K562 (cell line): ENCODE measurements at regions of chr1 and their contacts with region 1.

Region 1: GRCh38 chr1:62687903-62688686 is at the start of gene DOCK7:
- DNase-seq: peak; percentile 72 to 76 (median 74)
- ATAC-seq: peak; percentile 79
- H3K4me3 ChIP-seq: peak within 1 kb of the TSS; percentile 76
- H3K27ac ChIP-seq: peak within 1 kb of the TSS; percentile 78
- H3K4me1 ChIP-seq: peaks cover 23 to 32% of the 10 kb centered on the region in 2 experiments; a peak in 4 of 5 replicates
- H3K27me3 ChIP-seq: no peaks in the 10 kb centered on the region
- CTCF ChIP-seq: no peak
- EP300 ChIP-seq: no peak
- POLR2A ChIP-seq: peak; percentile 53
- RAD21 ChIP-seq: no peak; a peak in 1 of 4 replicates
- polyA plus RNA-seq, gene DOCK7: 4.9 to 10.6 TPM

Region 2: DNA sequence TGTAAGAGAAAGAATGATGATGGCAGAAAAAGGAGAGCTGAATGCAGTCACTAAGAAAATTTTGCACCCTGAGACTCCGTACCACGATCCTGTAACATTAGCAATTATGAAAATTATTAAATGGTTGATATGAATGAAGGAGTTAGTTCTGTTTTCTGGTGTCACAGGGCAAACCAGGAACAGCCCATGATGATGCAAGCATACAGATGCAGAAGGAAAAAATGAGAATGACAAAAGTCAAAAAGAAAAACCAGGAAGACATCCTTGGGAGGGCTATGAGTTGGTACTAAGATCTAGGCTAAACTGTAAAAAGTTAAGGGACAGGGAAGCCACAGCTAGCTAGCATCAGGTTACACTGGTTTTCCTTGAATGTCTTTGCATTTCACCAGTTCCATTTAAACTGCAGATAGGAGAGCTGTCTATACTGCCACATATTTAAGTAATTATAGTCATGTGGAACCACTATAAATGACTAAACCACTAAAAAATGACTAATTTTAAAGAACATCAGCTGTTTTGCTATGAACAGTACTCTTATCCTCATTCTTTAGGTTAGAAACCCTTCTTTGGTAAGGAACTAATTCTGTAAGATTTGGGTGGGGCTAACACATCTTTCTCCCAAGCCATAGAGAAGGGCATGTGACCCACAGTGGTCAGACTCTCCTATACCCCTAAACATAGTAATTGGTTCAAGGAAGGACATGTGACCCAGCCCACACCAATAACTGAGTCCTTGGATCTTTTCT is 11.3 kb before region 1 on chr1:
- CTCF ChIA-PET with region 1: no interaction called
- POLR2A ChIA-PET with region 1: interaction called, 12 read pairs
- in situ Hi-C with region 1: no loop called
- intact Hi-C with region 1: no loop called
- DNase-seq: no peak
- ATAC-seq: peak; percentile 64
- H3K4me3 ChIP-seq: no peak overlapping the region
- H3K27ac ChIP-seq: no peak overlapping the region
- H3K4me1 ChIP-seq: no peaks in the 10 kb centered on the region; a peak in 1 of 5 replicates
- H3K27me3 ChIP-seq: no peaks in the 10 kb centered on the region
- CTCF ChIP-seq: no peak
- EP300 ChIP-seq: no peak
- POLR2A ChIP-seq: no peak
- RAD21 ChIP-seq: no peak

Region 3: DNA sequence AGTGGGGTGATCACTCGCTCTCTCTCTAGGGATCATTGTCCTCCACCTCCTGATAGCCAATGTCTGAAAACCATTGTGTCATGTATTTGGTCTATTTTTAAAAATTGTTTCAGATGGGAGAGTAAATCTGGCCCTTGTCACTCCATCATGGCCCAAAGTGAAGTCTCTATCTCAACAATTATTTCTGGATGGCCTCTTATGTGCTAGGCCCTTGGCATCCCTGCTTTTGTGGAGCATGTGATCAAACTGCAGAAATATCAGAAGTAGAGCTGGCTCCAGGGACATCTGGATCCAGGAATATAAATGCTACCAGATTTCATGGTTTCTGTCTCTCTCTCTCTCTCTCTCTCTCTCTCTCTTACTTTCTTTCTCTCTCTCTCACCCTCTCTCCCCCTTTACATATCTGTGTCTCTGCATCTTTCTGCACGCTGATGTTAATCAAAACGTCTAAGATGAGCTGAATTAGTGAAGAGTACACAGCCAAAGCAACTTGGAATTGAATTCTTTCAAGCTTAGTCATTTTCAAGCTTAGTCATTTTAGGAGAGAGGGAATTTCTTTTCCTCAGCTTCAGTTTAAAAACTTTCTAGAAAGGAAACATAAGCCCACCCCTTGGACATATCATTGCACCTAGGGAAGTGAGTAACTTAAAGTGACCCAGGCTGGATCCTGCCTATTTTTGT is 47.5 kb after region 1 on chr1:
- CTCF ChIA-PET with region 1: no interaction called
- POLR2A ChIA-PET with region 1: interaction called, 3 read pairs
- in situ Hi-C with region 1: no loop called
- intact Hi-C with region 1: loop called (anchors 10 kb)
- DNase-seq: no peak
- ATAC-seq: no peak
- H3K4me3 ChIP-seq: no peak overlapping the region
- H3K27ac ChIP-seq: no peak overlapping the region
- H3K4me1 ChIP-seq: no peaks in the 10 kb centered on the region
- H3K27me3 ChIP-seq: no peaks in the 10 kb centered on the region; a peak in 2 of 5 replicates
- CTCF ChIP-seq: no peak
- EP300 ChIP-seq: no peak
- POLR2A ChIP-seq: no peak
- RAD21 ChIP-seq: no peak

Region 4: DNA sequence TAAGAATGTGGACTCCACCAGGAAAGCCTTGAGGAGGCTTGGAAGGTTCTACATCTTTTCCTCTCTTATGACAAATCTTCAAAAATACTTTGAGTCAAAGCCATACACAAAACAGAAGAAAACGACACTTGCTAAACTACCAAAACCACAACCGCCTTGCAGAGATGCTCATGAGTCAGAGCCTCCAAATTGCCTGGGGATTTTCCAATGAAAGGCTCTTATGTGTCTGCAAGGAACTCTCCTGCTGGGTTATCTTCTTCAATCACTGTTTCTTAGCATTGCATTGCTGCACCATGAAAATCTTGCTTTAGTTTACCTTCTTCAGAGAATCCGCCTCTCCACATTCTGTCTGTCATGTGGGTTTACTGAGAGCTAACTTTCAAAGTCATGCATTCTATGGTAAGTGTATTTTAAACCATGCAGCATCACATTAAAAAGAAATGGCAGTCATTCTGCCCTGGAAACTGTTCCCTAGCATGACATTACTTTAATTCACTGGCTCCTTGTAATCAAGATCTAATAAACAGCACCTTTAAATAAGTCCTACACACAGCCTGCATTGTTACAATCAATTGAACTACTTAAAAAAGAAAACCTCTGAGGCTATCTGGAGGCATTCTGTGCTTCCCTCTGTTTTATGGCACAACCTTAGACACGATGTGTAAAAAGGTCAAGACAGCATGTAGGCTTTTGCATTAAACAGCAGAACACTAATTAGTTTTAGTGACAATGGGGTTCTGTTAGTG is 424.2 kb after region 1 on chr1:
- CTCF ChIA-PET with region 1: no interaction called
- POLR2A ChIA-PET with region 1: no interaction called
- in situ Hi-C with region 1: no loop called
- intact Hi-C with region 1: no loop called
- DNase-seq: no peak
- ATAC-seq: no peak
- H3K4me3 ChIP-seq: no peak overlapping the region
- H3K27ac ChIP-seq: no peak overlapping the region
- H3K4me1 ChIP-seq: no peaks in the 10 kb centered on the region
- H3K27me3 ChIP-seq: peaks cover 0 to 3% of the 10 kb centered on the region in 2 experiments; a peak in 2 of 5 replicates
- CTCF ChIP-seq: no peak
- EP300 ChIP-seq: no peak
- POLR2A ChIP-seq: no peak
- RAD21 ChIP-seq: no peak